HepG2 (cell line): ENCODE measurements at regions of chr2 and their contacts with region 1.

Region 1: DNA sequence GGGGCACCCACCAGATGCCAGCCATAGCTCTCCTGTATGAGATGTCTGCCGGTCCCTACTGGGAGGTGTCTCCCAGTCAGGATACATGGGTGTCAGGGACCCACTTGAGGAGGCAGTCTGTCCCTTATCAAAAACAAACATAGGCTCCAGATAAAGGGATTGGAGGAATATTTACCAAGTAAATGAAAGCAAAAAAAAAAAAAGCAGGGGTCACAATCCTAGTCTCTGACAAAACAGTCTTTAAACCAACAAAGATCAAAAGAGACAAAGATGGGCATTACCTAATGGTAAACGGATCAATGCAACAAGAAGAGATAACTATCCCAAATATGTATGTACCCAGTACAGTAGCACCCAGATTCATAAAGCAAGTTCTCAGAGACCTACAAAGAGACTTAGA is 640.0 kb upstream of the LRRTM4 start:
- DNase-seq: peak; percentile 94
- ATAC-seq: peak; percentile 98
- H3K4me3 ChIP-seq: no peak overlapping the region
- H3K27ac ChIP-seq: no peak overlapping the region
- H3K4me1 ChIP-seq: peaks cover 18% of the 10 kb centered on the region
- H3K27me3 ChIP-seq: no peaks in the 10 kb centered on the region
- CTCF ChIP-seq: no peak
- EP300 ChIP-seq: peak; percentile 64 to 91; a peak in 3 of 4 replicates
- POLR2A ChIP-seq: no peak
- RAD21 ChIP-seq: no peak

Region 2: GRCh38 chr2:77807531-77808215 is 354.5 kb before region 1 on chr2:
- CTCF ChIA-PET with region 1: no interaction called
- POLR2A ChIA-PET with region 1: no interaction called
- in situ Hi-C with region 1: no loop called
- intact Hi-C with region 1: no loop called
- DNase-seq: no peak
- ATAC-seq: no peak
- H3K4me3 ChIP-seq: no peak overlapping the region
- H3K27ac ChIP-seq: no peak overlapping the region
- H3K4me1 ChIP-seq: no peaks in the 10 kb centered on the region
- H3K27me3 ChIP-seq: no peaks in the 10 kb centered on the region
- CTCF ChIP-seq: no peak
- EP300 ChIP-seq: no peak
- POLR2A ChIP-seq: no peak
- RAD21 ChIP-seq: no peak

Region 3: GRCh38 chr2:78147466-78147865 is 14.7 kb before region 1 on chr2:
- CTCF ChIA-PET with region 1: no interaction called
- POLR2A ChIA-PET with region 1: no interaction called
- in situ Hi-C with region 1: no loop called
- intact Hi-C with region 1: loop called (anchors 2 kb)
- DNase-seq: no peak
- ATAC-seq: peak; percentile 29; the same call in 2 of the 3 replicates
- H3K4me3 ChIP-seq: no peak overlapping the region
- H3K27ac ChIP-seq: no peak overlapping the region
- H3K4me1 ChIP-seq: no peaks in the 10 kb centered on the region
- H3K27me3 ChIP-seq: no peaks in the 10 kb centered on the region
- CTCF ChIP-seq: no peak
- EP300 ChIP-seq: no peak
- POLR2A ChIP-seq: no peak
- RAD21 ChIP-seq: no peak

Region 4: GRCh38 chr2:78260861-78261260 is 98.7 kb after region 1 on chr2:
- CTCF ChIA-PET with region 1: no interaction called
- POLR2A ChIA-PET with region 1: no interaction called
- in situ Hi-C with region 1: no loop called
- intact Hi-C with region 1: loop called (anchors 1 kb)
- DNase-seq: peak; percentile 93
- ATAC-seq: peak; percentile 100
- H3K4me3 ChIP-seq: peak overlapping the region; percentile 9 to 48 (median 44); a peak in 3 of 6 replicates
- H3K27ac ChIP-seq: peak overlapping the region; percentile 69
- H3K4me1 ChIP-seq: peaks cover 36% of the 10 kb centered on the region
- H3K27me3 ChIP-seq: no peaks in the 10 kb centered on the region
- CTCF ChIP-seq: no peak
- EP300 ChIP-seq: peak; percentile 32 to 96; a peak in 3 of 4 replicates
- POLR2A ChIP-seq: no peak
- RAD21 ChIP-seq: no peak